Naive thymus-derived CD4-positive, alpha-beta T cell (primary cell): ENCODE measurements at regions of chr22 and their contacts with region 1.

Region 1: GRCh38 chr22:46542011-46542985 is 4.9 kb upstream of the CELSR1 start:
- DNase-seq: peak; percentile 35 to 76 (median 66)
- ATAC-seq: peak; percentile 99
- H3K4me3 ChIP-seq: no peak overlapping the region
- H3K4me3 Mint-ChIP-seq: no peak overlapping the region
- H3K27ac ChIP-seq: no peak overlapping the region
- H3K27ac Mint-ChIP-seq: no peak overlapping the region
- H3K4me1 ChIP-seq: peaks cover 8% of the 10 kb centered on the region in 2 donors
- H3K4me1 Mint-ChIP-seq: peaks cover 0 to 12% (median 8%) of the 10 kb centered on the region in 7 donors
- H3K27me3 ChIP-seq: no peaks in the 10 kb centered on the region
- H3K27me3 Mint-ChIP-seq: peaks cover 19 to 32% (median 29%) of the 10 kb centered on the region in 5 donors

Region 2: DNA sequence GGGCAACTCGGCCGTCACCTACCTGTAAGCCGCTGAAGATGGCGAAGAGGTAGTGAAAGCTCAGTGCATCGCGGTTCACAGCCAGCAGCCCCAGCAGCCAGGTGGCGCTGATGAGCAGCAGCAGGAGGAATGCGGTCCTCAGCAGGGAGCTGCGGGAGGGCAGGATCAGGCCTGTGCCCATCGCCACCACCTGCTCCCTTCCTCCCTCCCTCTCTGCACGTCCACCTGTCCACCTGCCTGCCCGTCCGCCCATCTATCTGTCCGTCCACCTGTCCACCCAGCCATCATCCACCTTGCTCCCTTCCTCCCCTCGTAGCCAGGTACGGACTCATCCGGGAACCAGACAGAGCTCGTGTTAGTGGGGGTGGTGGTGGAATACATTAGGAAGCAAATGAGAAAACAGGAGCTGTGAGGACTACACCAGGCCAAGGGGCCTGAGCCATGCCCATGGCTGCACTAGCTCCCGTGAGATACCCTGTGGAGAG is 174.5 kb before region 1 on chr22:
- CTCF ChIA-PET with region 1: interaction called, 22 read pairs
- POLR2A ChIA-PET with region 1: no interaction called
- intact Hi-C with region 1: loop called in 1 of 2 experiments (anchors 1 kb)
- DNase-seq: peak; percentile 43 to 76 (median 65)
- ATAC-seq: peak; percentile 76
- H3K4me3 ChIP-seq: no peak overlapping the region
- H3K4me3 Mint-ChIP-seq: peak overlapping the region in 5 of 10 donors; percentile 23 to 82 (median 78)
- H3K27ac ChIP-seq: no peak overlapping the region
- H3K27ac Mint-ChIP-seq: peak overlapping the region in 1 of 9 donors; percentile 22
- H3K4me1 ChIP-seq: peaks cover 14 to 44% of the 10 kb centered on the region in 2 donors
- H3K4me1 Mint-ChIP-seq: peaks cover 0 to 28% (median 21%) of the 10 kb centered on the region in 7 donors
- H3K27me3 ChIP-seq: no peaks in the 10 kb centered on the region
- H3K27me3 Mint-ChIP-seq: peaks cover 0 to 20% (median 3%) of the 10 kb centered on the region in 5 donors